Colonic mucosa (tissue), 4 donors: ENCODE measurements at regions of chr5 and their contacts with region 1.

Region 1: GRCh38 chr5:97162045-97162444 is 19.6 kb upstream of the LIX1 start:
- DNase-seq: peak; percentile 80
- H3K4me3 ChIP-seq: no peak overlapping the region
- H3K27ac ChIP-seq: no peak overlapping the region
- H3K4me1 ChIP-seq: no peaks in the 10 kb centered on the region
- H3K27me3 ChIP-seq: no peaks in the 10 kb centered on the region
- CTCF ChIP-seq: peak; percentile 91

Region 2: GRCh38 chr5:96868603-96869371 is 293.3 kb before region 1 on chr5:
- intact Hi-C with region 1: loop called (anchors 5 kb)
- DNase-seq: no peak
- H3K4me3 ChIP-seq: no peak overlapping the region
- H3K27ac ChIP-seq: no peak overlapping the region
- H3K4me1 ChIP-seq: no peaks in the 10 kb centered on the region
- H3K27me3 ChIP-seq: no peaks in the 10 kb centered on the region
- CTCF ChIP-seq: peak; percentile 90

Region 3: DNA sequence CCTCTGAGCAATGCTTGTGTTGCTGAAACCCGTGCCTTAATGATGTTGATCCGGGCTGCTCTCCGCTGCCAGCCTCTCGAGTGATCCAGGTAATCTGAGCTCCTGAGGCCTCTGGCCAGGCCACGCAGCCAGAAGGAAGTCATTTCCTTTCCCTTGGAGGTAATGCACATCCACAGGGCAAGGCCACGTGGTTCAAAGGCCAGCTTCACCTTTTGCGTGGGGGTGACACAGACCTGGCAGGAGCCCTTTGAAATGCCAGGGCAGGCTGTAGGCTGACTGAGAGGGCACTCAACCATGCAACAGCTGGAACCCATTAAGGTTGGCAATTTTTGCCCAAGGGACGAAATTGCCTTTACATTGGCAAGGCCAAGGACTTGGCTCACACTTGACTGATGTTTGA is 100.0 kb before region 1 on chr5:
- intact Hi-C with region 1: no loop called
- DNase-seq: no peak
- H3K4me3 ChIP-seq: no peak overlapping the region
- H3K27ac ChIP-seq: no peak overlapping the region
- H3K4me1 ChIP-seq: no peaks in the 10 kb centered on the region
- H3K27me3 ChIP-seq: no peaks in the 10 kb centered on the region
- CTCF ChIP-seq: no peak